ENCODE measurements at regions of chr11 and their contacts with region 1.

Region 1: GRCh38 chr11:31369348-31370329 is at the starts of genes DCDC1 and DNAJC24:
- DNase-seq: peak; percentile 96
- ATAC-seq: peak; percentile 98
- H3K4me3 Mint-ChIP-seq: peak within 1 kb of the TSS; percentile 82
- H3K27ac Mint-ChIP-seq: peak within 1 kb of the TSS; percentile 80
- H3K4me1 Mint-ChIP-seq: peaks cover 44% of the 10 kb centered on the region
- H3K27me3 Mint-ChIP-seq: no peaks in the 10 kb centered on the region
- total RNA-seq, gene DCDC1: 0.23 to 0.32 TPM
- total RNA-seq, gene DNAJC24: 15.3 to 26.3 TPM

Region 2: GRCh38 chr11:30322826-30323710 is 1046.6 kb before region 1 on chr11 and contains the start of gene ARL14EP:
- CTCF ChIA-PET with region 1: no interaction called
- POLR2A ChIA-PET with region 1: no interaction called
- intact Hi-C with region 1: loop called (anchors 5 to 10 kb)
- DNase-seq: peak; percentile 94
- ATAC-seq: peak; percentile 92
- H3K4me3 Mint-ChIP-seq: peak within 1 kb of the TSS; percentile 94
- H3K27ac Mint-ChIP-seq: peak within 1 kb of the TSS; percentile 100
- H3K4me1 Mint-ChIP-seq: peaks cover 38% of the 10 kb centered on the region
- H3K27me3 Mint-ChIP-seq: peaks cover 6% of the 10 kb centered on the region
- total RNA-seq, gene ARL14EP: 34.8 to 51.8 TPM

Region 3: DNA sequence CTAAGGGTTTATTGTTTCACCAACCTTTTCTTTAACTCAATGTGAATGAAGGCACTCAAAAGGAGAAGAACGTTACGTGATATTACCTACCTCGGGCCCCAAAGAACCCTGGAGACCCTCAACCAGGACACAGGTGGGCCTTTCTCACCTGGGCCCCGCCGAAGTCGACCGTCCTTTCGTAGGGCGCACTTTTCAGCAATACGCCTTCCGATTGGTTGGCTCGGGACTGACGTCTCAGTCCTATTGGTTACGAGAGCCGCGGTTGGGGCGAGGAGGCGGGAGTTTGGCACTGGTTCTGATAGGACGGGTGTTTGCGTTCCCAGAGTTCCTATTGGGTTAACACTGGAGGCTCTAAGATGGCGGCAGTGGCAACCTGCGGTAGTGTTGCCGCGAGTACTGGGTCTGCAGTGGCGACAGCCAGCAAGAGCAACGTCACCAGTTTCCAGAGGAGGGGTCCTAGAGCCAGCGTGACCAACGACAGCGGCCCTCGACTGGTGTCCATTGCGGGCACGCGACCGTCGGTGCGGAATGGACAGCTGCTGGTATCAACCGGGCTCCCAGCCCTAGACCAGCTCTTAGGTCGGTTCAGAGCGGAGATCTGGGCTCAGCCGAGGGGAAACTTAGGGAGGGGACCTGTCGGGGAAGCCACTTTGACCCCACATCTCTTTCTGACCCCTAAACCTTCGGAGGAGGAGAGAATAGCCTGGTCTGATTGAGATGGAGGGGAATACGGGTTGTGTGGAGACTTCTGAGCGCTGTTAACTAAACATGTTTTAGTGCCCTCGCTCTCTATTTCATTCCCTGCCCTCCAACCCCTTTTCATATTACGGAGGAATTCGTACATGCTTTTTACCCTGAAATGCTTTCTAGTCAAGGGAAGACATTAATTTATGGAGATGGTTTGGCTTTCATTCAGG is 140.0 kb after region 1 on chr11 and contains the starts of genes ELP4 and IMMP1L:
- CTCF ChIA-PET with region 1: no interaction called
- POLR2A ChIA-PET with region 1: no interaction called
- intact Hi-C with region 1: loop called (anchors 1 to 2 kb)
- DNase-seq: peak; percentile 97
- ATAC-seq: peak; percentile 100
- H3K4me3 Mint-ChIP-seq: peak within 1 kb of the TSS; percentile 98
- H3K27ac Mint-ChIP-seq: peak within 1 kb of the TSS; percentile 88
- H3K4me1 Mint-ChIP-seq: peaks cover 36% of the 10 kb centered on the region
- H3K27me3 Mint-ChIP-seq: no peaks in the 10 kb centered on the region
- total RNA-seq, gene ELP4: 21.9 to 30.9 TPM
- total RNA-seq, gene IMMP1L: 18.8 to 21.0 TPM

Region 4: GRCh38 chr11:32090545-32091373 is 721.1 kb after region 1 on chr11 and contains the start of gene RCN1:
- CTCF ChIA-PET with region 1: no interaction called
- POLR2A ChIA-PET with region 1: no interaction called
- intact Hi-C with region 1: loop called in 1 of 2 experiments (anchors 1 kb)
- DNase-seq: peak; percentile 62
- ATAC-seq: peak; percentile 59
- H3K4me3 Mint-ChIP-seq: peak within 1 kb of the TSS; percentile 79
- H3K27ac Mint-ChIP-seq: peak within 1 kb of the TSS; percentile 85
- H3K4me1 Mint-ChIP-seq: peaks cover 43% of the 10 kb centered on the region
- H3K27me3 Mint-ChIP-seq: peaks cover 10% of the 10 kb centered on the region
- total RNA-seq, gene RCN1: 19.1 to 24.1 TPM